A673 (cell line): ENCODE measurements at regions of chr7 and their contacts with region 1.

Region 1: DNA sequence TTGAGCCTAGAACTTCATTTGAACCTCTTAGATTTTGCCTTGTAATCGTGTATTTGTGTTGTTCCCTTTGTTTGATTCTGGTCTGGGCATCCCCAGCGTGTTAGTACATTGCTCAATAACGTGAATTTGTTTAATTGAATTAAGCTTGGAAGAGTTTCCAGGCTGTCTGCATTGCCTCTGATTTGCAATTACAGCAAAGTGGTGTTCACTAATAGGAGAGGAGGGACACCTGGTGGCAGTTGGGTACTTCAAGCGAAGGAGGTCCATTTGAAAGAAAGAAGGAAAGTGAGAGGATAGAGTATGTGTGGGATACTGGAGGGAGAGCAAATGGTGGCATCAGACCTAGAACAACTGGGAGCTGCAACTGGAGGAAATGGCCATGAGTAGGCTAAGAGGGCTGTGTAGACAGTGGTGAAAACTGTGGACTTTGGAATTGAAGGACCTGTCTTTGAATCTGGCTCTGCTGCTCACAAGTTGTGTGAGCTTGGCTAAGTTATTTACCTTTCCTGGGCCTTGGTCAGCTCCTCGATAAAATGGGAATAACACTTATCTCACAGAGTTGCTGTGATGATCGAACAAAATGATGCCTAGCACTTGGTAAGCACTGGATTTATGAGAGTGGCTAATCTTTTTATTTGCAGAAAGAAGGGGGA is 15.1 kb downstream of the LSMEM1 start:
- DNase-seq: peak; percentile 88
- H3K4me3 ChIP-seq: no peak overlapping the region
- H3K27ac ChIP-seq: no peak overlapping the region
- H3K4me1 ChIP-seq: peaks cover 11% of the 10 kb centered on the region
- H3K27me3 ChIP-seq: no peaks in the 10 kb centered on the region
- CTCF ChIP-seq: peak; percentile 74

Region 2: DNA sequence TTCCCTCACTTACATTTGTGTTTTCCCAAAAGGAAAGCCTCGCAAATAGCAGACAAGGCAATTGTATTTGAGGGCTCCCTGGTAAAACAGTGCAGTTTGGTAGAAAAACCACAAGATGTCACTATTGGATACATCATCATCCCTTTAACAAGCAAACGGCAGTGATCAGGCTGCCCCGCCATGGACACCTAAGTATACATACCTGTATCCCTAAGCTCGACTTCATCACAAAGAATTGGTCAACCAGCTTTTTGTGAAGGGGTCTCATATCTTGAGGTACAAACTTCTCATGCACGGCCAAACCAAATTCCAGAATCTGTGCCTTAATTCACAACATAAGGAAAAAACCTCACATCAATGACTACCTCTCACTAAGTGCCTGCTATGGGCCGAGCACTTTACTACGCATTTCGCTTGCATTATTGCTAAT is 754.1 kb before region 1 on chr7:
- CTCF ChIA-PET with region 1: no interaction called
- POLR2A ChIA-PET with region 1: no interaction called
- intact Hi-C with region 1: loop called (anchors 5 kb)
- DNase-seq: peak; percentile 71
- H3K4me3 ChIP-seq: no peak overlapping the region
- H3K27ac ChIP-seq: no peak overlapping the region
- H3K4me1 ChIP-seq: no peaks in the 10 kb centered on the region
- H3K27me3 ChIP-seq: no peaks in the 10 kb centered on the region
- CTCF ChIP-seq: peak; percentile 81

Region 3: GRCh38 chr7:111855161-111855856 is 640.6 kb before region 1 on chr7:
- CTCF ChIA-PET with region 1: no interaction called
- POLR2A ChIA-PET with region 1: no interaction called
- intact Hi-C with region 1: loop called (anchors 10 kb)
- DNase-seq: peak; percentile 79
- H3K4me3 ChIP-seq: no peak overlapping the region
- H3K27ac ChIP-seq: no peak overlapping the region
- H3K4me1 ChIP-seq: peaks cover 2% of the 10 kb centered on the region
- H3K27me3 ChIP-seq: no peaks in the 10 kb centered on the region
- CTCF ChIP-seq: peak; percentile 74

Region 4: DNA sequence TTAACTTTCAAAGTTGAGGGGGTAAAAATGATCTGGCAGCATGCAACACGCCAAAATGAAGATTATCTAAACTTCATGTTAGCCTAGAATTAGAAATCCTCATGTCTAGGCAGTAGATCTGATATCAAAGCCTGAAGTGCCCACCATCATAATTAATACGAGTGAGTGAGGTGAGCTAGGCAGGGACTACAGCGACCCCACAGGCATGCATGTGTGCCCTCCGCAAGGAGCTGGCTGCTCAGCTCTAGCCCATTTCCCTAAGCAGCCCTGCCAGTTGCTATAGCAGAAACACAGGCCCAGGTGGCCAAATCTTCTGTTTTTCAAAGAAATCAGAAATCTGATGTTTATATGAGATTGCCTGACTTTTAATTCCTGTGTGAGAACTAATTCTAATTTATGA is 138.8 kb before region 1 on chr7:
- CTCF ChIA-PET with region 1: no interaction called
- POLR2A ChIA-PET with region 1: no interaction called
- intact Hi-C with region 1: no loop called
- DNase-seq: peak; percentile 6
- H3K4me3 ChIP-seq: no peak overlapping the region
- H3K27ac ChIP-seq: no peak overlapping the region
- H3K4me1 ChIP-seq: no peaks in the 10 kb centered on the region
- H3K27me3 ChIP-seq: no peaks in the 10 kb centered on the region
- CTCF ChIP-seq: 0 out of 2 replicates have a peak, but pooled peaks have one; percentile 17

Region 5: GRCh38 chr7:112452102-112452888 is 43.6 kb before region 1 on chr7:
- CTCF ChIA-PET with region 1: no interaction called
- POLR2A ChIA-PET with region 1: interaction called, 13 read pairs
- intact Hi-C with region 1: no loop called
- DNase-seq: peak; percentile 46
- H3K4me3 ChIP-seq: peak overlapping the region; percentile 90
- H3K27ac ChIP-seq: peak overlapping the region; percentile 37
- H3K4me1 ChIP-seq: peaks cover 14% of the 10 kb centered on the region
- H3K27me3 ChIP-seq: no peaks in the 10 kb centered on the region
- CTCF ChIP-seq: no peak; the same call in 1 of the 2 replicates